ENCODE measurements at regions of chr20 and their contacts with region 1.

Region 1: DNA sequence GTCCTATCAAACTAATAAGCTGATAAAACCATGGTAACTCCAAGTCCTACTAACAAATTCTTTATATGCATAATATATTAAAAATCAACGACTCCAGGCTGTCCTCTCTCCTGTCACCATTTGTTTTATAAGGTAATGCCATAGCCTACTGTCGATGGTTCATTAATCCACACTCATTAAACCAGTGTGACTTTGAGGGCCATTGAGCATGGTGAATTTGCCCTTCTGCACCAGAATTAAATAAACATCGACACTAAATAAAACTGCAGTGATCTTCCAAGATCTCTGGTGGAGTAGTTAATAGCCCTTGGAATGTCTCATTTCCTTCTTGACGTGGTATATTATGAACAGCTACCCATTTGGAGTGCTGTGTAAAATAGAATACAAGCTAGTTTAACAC is 358.5 kb downstream of the CBLN4 start:
- DNase-seq: no peak
- ATAC-seq: no peak
- H3K4me3 ChIP-seq: no peak overlapping the region
- H3K27ac ChIP-seq: no peak overlapping the region
- H3K4me1 ChIP-seq: no peaks in the 10 kb centered on the region
- H3K27me3 ChIP-seq: no peaks in the 10 kb centered on the region
- CTCF ChIP-seq: no peak

Region 2: DNA sequence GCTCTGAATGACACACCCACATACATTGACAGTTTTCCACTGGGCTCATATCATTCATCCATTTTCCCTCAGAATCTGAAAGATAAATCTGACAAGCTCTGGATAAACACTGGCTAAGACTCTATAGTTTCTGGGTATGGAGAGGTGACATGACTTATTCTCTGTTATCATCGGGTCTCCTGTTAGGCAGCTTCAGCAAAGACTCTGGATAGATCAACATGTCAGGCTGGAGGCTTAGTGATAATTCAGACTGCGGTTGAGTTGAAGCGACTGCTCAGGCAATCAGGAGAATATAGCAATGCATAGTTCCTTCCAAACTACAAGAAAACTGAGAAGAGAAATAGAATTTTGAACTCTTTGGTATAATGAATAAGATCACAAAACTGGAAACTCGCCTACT is 36.1 kb before region 1 on chr20:
- CTCF ChIA-PET with region 1: no interaction called
- POLR2A ChIA-PET with region 1: interaction called, 28 read pairs
- intact Hi-C with region 1: no loop called
- DNase-seq: no peak
- ATAC-seq: no peak
- H3K4me3 ChIP-seq: no peak overlapping the region
- H3K27ac ChIP-seq: no peak overlapping the region
- H3K4me1 ChIP-seq: no peaks in the 10 kb centered on the region
- H3K27me3 ChIP-seq: no peaks in the 10 kb centered on the region
- CTCF ChIP-seq: no peak

Measured in PC-3 (cell line).